ENCODE measurements at regions of chr5 and their contacts with region 1.

Region 1: DNA sequence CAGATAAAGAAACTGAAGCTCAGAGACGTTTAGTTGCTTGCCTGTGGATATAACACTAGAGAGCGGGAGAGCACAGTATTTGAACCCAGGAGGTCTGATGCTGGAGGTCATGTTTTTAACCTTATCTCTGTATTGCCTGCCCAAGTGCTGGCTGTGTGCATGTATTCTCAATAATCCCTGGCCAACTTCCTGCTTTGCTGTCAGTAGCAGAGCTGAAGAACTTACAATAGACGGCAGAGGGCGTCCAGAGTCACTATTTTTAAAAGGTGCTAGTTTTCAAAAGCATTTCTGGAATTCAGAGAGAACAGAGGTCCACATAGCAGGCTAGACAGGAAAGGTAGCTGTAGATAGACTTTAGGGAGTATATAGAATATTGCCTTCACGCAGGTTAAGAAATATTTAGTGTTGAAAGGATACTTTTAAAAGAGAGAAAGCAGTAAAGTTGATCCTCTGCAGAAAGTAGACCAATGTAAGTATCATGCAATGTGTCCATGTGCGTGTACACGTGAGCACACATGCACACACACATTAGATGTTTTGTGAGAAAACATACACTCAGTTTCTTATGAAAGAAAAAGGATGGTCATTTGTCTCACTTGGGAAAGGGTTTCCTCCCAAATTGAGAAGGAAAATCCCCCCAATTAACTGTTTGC is 46.3 kb downstream of the PTCD2 start:
- DNase-seq: no peak
- H3K4me3 ChIP-seq: no peak overlapping the region
- H3K27ac ChIP-seq: no peak overlapping the region
- H3K4me1 ChIP-seq: peaks cover 0 to 6% (median 4%) of the 10 kb centered on the region in 4 experiments; a peak in 4 of 7 replicates
- H3K27me3 ChIP-seq: no peaks in the 10 kb centered on the region
- CTCF ChIP-seq: peak in 2 of 3 experiments; percentile 46 to 61; a peak in 2 of 4 replicates
- EP300 ChIP-seq: no peak
- POLR2A ChIP-seq: no peak
- RAD21 ChIP-seq: peak; percentile 70 to 77

Region 2: GRCh38 chr5:72214168-72214567 is 152.3 kb before region 1 on chr5:
- CTCF ChIA-PET with region 1: no interaction called
- POLR2A ChIA-PET with region 1: no interaction called
- DNase-seq: no peak
- H3K4me3 ChIP-seq: no peak overlapping the region
- H3K27ac ChIP-seq: no peak overlapping the region
- H3K4me1 ChIP-seq: peaks cover 2 to 13% (median 7%) of the 10 kb centered on the region in 4 experiments; a peak in 5 of 7 replicates
- H3K27me3 ChIP-seq: peaks cover 0 to 2% (median 0%) of the 10 kb centered on the region in 4 experiments; a peak in 1 of 7 replicates
- CTCF ChIP-seq: no peak
- EP300 ChIP-seq: no peak
- POLR2A ChIP-seq: no peak
- RAD21 ChIP-seq: no peak

Region 3: GRCh38 chr5:72355706-72356299 is 10.6 kb before region 1 on chr5:
- CTCF ChIA-PET with region 1: interaction called, 38 read pairs
- POLR2A ChIA-PET with region 1: no interaction called
- DNase-seq: no peak
- H3K4me3 ChIP-seq: no peak overlapping the region
- H3K27ac ChIP-seq: no peak overlapping the region
- H3K4me1 ChIP-seq: no peaks in the 10 kb centered on the region
- H3K27me3 ChIP-seq: no peaks in the 10 kb centered on the region
- CTCF ChIP-seq: peak; percentile 53 to 83 (median 67)
- EP300 ChIP-seq: no peak
- POLR2A ChIP-seq: no peak
- RAD21 ChIP-seq: peak; percentile 75 to 82

Region 4: DNA sequence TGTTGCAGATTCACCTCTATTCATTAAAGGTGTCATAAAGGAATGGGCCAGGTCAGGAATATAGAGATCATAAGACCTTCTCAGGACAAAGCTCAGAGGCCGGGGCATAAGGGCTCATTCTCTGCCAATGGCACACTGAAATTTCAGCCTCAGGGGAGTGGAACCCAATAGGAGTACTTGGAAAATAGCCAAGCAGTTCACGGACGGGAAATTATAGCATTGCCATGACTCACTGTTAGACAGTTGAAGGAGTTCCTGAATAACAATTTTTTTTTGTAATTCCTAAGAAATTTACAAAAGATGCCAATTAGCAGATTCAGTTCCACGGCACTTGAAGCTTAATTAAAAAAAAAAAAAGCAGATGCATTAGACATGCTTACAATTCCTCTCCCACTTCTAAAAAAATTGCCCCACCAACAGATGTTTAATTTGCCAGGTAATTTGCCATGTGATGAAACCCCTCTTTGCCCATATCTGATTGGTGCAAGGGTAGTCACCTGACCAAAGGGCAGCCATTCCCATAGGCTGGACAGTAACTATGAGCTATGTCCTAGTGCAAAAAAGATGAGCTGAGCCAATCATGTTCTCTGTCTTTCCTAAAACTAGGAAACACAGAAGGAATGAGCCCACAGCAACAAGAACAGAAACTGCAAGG is 12.3 kb after region 1 on chr5:
- CTCF ChIA-PET with region 1: interaction called, 14 read pairs
- POLR2A ChIA-PET with region 1: interaction called, 6 read pairs
- DNase-seq: no peak
- H3K4me3 ChIP-seq: no peak overlapping the region
- H3K27ac ChIP-seq: no peak overlapping the region
- H3K4me1 ChIP-seq: no peaks in the 10 kb centered on the region
- H3K27me3 ChIP-seq: no peaks in the 10 kb centered on the region
- CTCF ChIP-seq: no peak
- EP300 ChIP-seq: no peak
- POLR2A ChIP-seq: no peak
- RAD21 ChIP-seq: no peak

Region 5: GRCh38 chr5:72393058-72393457 is 26.6 kb after region 1 on chr5:
- CTCF ChIA-PET with region 1: no interaction called
- POLR2A ChIA-PET with region 1: no interaction called
- DNase-seq: no peak
- H3K4me3 ChIP-seq: no peak overlapping the region
- H3K27ac ChIP-seq: no peak overlapping the region
- H3K4me1 ChIP-seq: peaks cover 0 to 2% (median under 1%) of the 10 kb centered on the region in 4 experiments; a peak in 1 of 7 replicates
- H3K27me3 ChIP-seq: no peaks in the 10 kb centered on the region
- CTCF ChIP-seq: no peak
- EP300 ChIP-seq: no peak
- POLR2A ChIP-seq: no peak
- RAD21 ChIP-seq: no peak

Region 6: DNA sequence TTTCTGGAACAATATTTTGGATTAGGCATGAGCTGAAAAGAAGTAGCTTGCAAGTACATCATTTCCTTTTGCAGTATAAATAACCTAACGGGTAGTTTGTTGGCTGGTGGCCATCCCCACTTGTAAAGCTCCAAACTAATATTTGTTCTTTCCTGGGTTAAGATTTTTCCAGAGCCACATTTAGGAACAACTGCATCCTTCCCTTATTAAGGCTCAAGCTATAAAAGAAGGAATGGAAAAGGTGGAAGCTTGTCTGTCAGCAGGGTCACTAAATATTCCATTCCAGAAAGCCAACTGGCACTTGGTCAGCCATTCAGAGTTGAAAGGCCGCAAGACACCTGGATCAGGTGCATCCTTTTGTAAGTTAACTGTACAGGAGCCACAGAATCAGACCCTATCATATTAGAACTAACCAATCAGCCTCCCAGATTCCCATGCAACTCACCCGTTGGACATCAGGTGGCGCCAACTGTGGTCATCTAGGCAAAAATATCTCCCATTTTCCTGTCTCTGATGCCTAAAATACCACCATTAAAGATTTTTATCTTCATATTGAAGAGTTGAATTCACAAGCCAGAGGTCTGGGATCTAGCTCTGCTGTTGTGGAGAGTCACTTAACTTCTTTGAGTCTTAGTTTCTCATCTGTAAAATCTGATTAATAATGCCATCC is 36.6 kb after region 1 on chr5:
- CTCF ChIA-PET with region 1: interaction called, 14 read pairs
- POLR2A ChIA-PET with region 1: interaction called, 3 read pairs
- DNase-seq: peak in 1 of 2 experiments; percentile 62
- H3K4me3 ChIP-seq: no peak overlapping the region
- H3K27ac ChIP-seq: no peak overlapping the region
- H3K4me1 ChIP-seq: 0 out of 7 replicates have a peak, but pooled peaks cover 0 to 2% (median 0%) of the 10 kb centered on the region in 4 experiments
- H3K27me3 ChIP-seq: no peaks in the 10 kb centered on the region
- CTCF ChIP-seq: peak; percentile 53 to 66 (median 62)
- EP300 ChIP-seq: no peak
- POLR2A ChIP-seq: no peak
- RAD21 ChIP-seq: peak; percentile 55 to 64

Region 7: DNA sequence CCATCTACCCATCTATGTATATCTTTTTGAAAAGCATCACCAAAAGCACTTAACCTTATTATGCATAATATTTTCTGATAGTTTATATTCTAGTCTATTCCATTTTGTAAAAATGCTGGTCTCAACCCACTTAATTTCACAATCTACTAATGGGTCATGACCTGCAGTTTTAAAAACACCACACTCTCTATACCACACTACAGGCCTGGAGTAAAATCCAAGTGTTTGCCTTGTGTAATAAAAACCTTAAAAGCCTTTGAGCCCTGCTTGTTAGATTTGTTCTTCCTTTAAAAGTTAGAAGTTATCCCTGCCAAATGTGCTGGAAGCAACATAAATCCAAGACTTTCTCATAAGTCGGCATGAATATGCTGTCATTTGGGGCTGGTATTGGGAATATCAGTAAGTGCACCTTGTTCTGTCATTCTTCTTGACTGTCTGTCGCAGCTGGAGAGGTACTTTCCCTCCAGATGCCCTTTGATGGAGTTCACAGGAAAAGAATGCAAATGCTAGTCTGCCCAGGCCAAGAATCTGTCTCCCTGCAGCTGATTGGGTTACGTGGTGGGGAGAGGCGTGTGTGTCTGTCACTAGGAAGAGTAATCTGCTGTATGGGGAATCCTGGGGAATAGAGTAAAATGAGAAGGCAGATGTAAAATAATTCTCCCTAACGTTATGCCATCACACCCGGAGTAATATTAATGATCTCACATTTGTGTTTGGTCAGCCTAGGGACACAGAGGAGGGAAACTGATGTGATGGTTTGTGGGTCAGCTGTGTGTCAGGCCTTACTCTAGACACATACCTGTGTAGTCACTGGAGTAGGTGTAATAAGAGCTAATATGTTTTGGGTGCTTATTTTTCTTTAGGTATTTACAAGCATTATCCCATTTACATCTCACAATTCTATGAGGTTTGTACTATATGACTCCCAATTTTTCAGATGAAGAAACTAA is 61.3 kb after region 1 on chr5:
- CTCF ChIA-PET with region 1: no interaction called
- POLR2A ChIA-PET with region 1: no interaction called
- DNase-seq: no peak
- H3K4me3 ChIP-seq: no peak overlapping the region
- H3K27ac ChIP-seq: no peak overlapping the region
- H3K4me1 ChIP-seq: peaks cover 0 to 3% (median 0%) of the 10 kb centered on the region in 4 experiments; a peak in 2 of 7 replicates
- H3K27me3 ChIP-seq: no peaks in the 10 kb centered on the region
- CTCF ChIP-seq: no peak
- EP300 ChIP-seq: no peak
- POLR2A ChIP-seq: no peak
- RAD21 ChIP-seq: no peak

Region 8: DNA sequence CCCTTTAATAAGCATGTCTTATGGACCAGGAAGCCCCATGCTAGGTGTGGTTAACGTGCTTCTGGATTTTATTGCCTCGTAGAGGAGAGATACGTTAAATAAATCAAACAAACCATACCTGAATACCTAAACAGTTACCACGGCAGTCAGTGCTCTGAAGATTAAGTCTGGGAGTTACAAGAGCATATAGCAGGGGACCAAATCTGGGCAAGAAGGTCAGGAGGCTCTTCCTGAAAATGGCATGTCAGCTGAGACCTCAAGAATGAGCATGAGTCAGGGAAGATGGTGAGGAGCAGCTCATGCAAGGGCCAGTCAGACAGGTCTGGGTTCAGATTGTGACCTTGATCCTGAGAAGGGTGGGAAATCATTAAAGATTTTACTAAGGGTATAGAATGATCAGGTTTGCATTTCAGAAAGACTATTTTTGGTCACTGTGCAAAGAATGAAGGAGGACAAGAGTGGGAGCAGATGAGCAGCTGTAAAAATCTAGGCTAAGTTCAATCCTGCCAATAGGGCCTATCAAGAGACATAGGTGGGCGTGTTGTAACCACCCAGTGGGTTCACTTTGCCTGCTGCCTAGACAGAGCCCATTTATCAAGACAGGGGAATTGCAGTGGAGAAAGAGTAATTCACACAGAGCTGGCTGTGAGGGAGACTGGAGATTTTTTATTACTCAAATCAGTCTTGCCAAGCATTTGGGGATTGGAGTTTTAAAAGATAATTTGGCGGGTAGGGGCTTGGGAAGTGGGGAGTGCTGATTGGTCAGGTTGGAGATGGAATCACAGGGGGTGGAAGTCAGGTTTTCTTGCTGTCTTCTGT is 145.5 kb after region 1 on chr5:
- CTCF ChIA-PET with region 1: interaction called, 13 read pairs
- POLR2A ChIA-PET with region 1: no interaction called
- DNase-seq: no peak
- H3K4me3 ChIP-seq: no peak overlapping the region
- H3K27ac ChIP-seq: no peak overlapping the region
- H3K4me1 ChIP-seq: peaks cover 0 to 8% (median 0%) of the 10 kb centered on the region in 4 experiments; a peak in 1 of 7 replicates
- H3K27me3 ChIP-seq: no peaks in the 10 kb centered on the region
- CTCF ChIP-seq: no peak
- EP300 ChIP-seq: no peak
- POLR2A ChIP-seq: no peak
- RAD21 ChIP-seq: no peak

Region 9: GRCh38 chr5:72518001-72518683 is 151.7 kb after region 1 on chr5:
- CTCF ChIA-PET with region 1: interaction called, 34 read pairs
- POLR2A ChIA-PET with region 1: no interaction called
- DNase-seq: no peak
- H3K4me3 ChIP-seq: no peak overlapping the region
- H3K27ac ChIP-seq: no peak overlapping the region
- H3K4me1 ChIP-seq: peaks cover 0 to 4% (median 1%) of the 10 kb centered on the region in 4 experiments; a peak in 1 of 7 replicates
- H3K27me3 ChIP-seq: no peaks in the 10 kb centered on the region
- CTCF ChIP-seq: no peak
- EP300 ChIP-seq: no peak
- POLR2A ChIP-seq: no peak
- RAD21 ChIP-seq: no peak